CD14-positive monocyte (primary cell): ENCODE measurements at regions of chr1 and their contacts with region 1.

Region 1: GRCh38 chr1:225772323-225772768 is 5.3 kb upstream of the SRP9 start:
- DNase-seq: peak; percentile 53 to 77 (median 70)
- H3K4me3 ChIP-seq: no peak overlapping the region
- H3K4me3 Mint-ChIP-seq: no peak overlapping the region
- H3K27ac ChIP-seq: no peak overlapping the region
- H3K27ac Mint-ChIP-seq: no peak overlapping the region
- H3K4me1 ChIP-seq: peaks cover 10 to 13% of the 10 kb centered on the region in 2 donors
- H3K4me1 Mint-ChIP-seq: peaks cover 4% of the 10 kb centered on the region
- H3K27me3 ChIP-seq: no peaks in the 10 kb centered on the region
- H3K27me3 Mint-ChIP-seq: peaks cover 0 to 2% (median 1%) of the 10 kb centered on the region in 3 donors
- CTCF ChIP-seq: peak; percentile 79

Region 2: GRCh38 chr1:225593414-225593813 is 178.9 kb before region 1 on chr1:
- intact Hi-C with region 1: no loop called
- DNase-seq: no peak
- H3K4me3 ChIP-seq: no peak overlapping the region
- H3K4me3 Mint-ChIP-seq: no peak overlapping the region
- H3K27ac ChIP-seq: no peak overlapping the region
- H3K27ac Mint-ChIP-seq: no peak overlapping the region
- H3K4me1 ChIP-seq: no peaks in the 10 kb centered on the region
- H3K4me1 Mint-ChIP-seq: no peaks in the 10 kb centered on the region
- H3K27me3 ChIP-seq: no peaks in the 10 kb centered on the region
- H3K27me3 Mint-ChIP-seq: peaks cover 2 to 6% (median 5%) of the 10 kb centered on the region in 3 donors
- CTCF ChIP-seq: no peak

Region 3: DNA sequence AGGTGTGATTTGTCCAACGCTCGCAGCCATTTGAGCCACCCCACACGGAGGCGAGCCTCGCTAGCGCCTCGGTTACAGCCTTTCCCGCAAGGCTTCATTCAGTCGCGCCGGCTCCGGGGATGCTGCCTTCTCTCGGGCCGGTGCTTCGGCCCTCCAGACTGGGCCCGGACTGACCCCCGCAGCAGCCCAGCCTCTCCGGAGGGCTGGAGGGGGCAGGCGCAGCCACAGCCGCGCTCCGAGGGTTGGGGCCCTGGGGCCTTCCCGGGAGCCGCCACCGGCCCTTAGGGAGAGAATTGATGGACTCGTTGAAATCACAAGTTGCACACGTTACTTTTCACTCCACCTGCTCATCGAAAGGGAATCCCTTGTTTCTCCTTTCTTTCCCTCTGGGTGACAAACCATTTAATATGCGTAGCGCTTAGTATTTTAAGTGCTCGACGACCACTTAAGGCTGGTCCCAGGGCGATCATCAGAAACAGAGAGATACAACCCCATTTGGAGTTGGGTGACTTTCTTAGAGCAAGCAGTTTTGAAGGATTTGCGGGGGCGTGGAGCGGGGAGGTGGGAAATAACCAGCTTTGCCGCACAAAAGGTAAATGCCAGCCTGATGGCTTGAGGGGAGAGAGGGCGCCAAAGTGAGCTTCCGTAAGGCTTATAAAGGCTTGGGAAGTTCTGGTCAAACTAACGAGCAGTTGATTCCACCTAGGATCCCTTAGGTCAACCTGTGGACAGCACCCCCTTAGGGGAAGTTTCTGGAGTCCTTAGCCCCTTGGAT is 94.8 kb before region 1 on chr1:
- intact Hi-C with region 1: no loop called
- DNase-seq: no peak
- H3K4me3 ChIP-seq: peak overlapping the region in 1 of 3 experiments; percentile 19
- H3K4me3 Mint-ChIP-seq: peak overlapping the region in 1 of 2 donors; percentile 76
- H3K27ac ChIP-seq: no peak overlapping the region
- H3K27ac Mint-ChIP-seq: no peak overlapping the region
- H3K4me1 ChIP-seq: peaks cover 5 to 8% of the 10 kb centered on the region in 2 donors
- H3K4me1 Mint-ChIP-seq: peaks cover 14% of the 10 kb centered on the region
- H3K27me3 ChIP-seq: peaks cover 6 to 19% of the 10 kb centered on the region in 2 donors
- H3K27me3 Mint-ChIP-seq: peaks cover 27 to 42% (median 40%) of the 10 kb centered on the region in 3 donors
- CTCF ChIP-seq: no peak

Region 4: DNA sequence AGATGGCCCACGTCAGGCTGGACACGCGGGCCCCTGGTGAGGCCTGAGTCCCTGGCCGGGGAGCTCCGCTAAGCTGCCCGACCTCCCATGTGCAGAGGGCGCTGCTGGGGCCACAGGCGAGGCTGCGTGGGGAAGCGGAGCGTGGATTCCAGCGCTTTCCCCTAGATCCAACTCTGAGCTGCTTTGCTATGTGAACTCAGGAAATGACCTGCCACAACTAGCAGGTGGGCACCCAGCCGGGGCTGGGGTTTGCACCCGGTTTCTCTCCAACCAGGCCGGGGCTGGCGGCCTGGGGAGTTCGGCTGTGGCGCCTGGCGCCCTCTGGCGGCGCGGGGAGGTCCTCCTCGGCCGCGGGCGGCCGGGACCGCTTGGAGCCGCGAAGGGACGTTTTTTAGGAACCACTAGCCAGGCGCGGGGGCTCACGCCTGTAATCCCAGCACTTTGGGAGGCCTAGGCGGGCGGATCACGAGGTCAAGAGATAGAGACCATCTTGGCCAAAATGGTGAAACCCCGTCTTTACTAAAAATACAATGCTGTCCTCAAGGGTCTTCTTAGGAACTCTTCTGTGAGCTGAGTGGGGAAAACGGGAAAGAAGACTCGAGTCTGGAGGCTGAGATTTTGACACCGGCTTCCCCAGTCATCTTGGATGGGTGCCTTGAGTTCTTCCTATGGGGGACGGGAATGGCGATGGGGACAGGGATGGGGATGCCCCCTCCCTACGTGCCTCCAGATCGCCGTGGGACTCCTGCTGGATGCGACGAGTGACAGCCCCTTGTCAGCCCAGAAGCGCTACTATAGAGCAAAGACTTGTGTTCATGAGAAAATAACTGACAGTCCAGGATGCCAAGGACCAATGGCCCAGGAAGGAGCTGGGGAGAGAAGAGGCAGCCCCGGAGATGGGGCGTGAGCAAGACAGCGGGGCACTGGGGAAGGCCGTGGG is 139.1 kb after region 1 on chr1:
- intact Hi-C with region 1: loop called in 1 of 2 experiments (anchors 5 kb)
- DNase-seq: peak; percentile 42 to 47 (median 45)
- H3K4me3 ChIP-seq: no peak overlapping the region
- H3K4me3 Mint-ChIP-seq: no peak overlapping the region
- H3K27ac ChIP-seq: no peak overlapping the region
- H3K27ac Mint-ChIP-seq: no peak overlapping the region
- H3K4me1 ChIP-seq: peaks cover 0 to 6% of the 10 kb centered on the region in 2 donors
- H3K4me1 Mint-ChIP-seq: no peaks in the 10 kb centered on the region
- H3K27me3 ChIP-seq: no peaks in the 10 kb centered on the region
- H3K27me3 Mint-ChIP-seq: peaks cover 0 to 2% (median 2%) of the 10 kb centered on the region in 3 donors
- CTCF ChIP-seq: peak; percentile 89